ENCODE measurements at regions of chr7 and their contacts with region 1.

Region 1: GRCh38 chr7:151448261-151449252 is 8.6 kb upstream of the CRYGN start:
- DNase-seq: peak; percentile 55 to 92 (median 78)
- ATAC-seq: peak; percentile 91 to 92
- H3K4me3 Mint-ChIP-seq: peak overlapping the region; percentile 71 to 90 (median 82)
- H3K27ac Mint-ChIP-seq: peak overlapping the region in 7 of 10 donors; percentile 34 to 91 (median 81)
- H3K4me1 Mint-ChIP-seq: peaks cover 3 to 17% (median 8%) of the 10 kb centered on the region in 4 donors
- H3K27me3 Mint-ChIP-seq: peaks cover 0 to 6% (median 4%) of the 10 kb centered on the region in 5 donors

Region 2: GRCh38 chr7:151368136-151368571 is 80.4 kb before region 1 on chr7:
- POLR2A ChIA-PET with region 1: interaction called, 27 read pairs
- DNase-seq: peak; percentile 54 to 85 (median 72)
- ATAC-seq: peak; percentile 95 to 100
- H3K4me3 Mint-ChIP-seq: peak overlapping the region in 1 of 10 donors; percentile 8
- H3K27ac Mint-ChIP-seq: peak overlapping the region in 4 of 10 donors; percentile 3 to 76 (median 64)
- H3K4me1 Mint-ChIP-seq: peaks cover 8 to 21% (median 20%) of the 10 kb centered on the region in 4 donors
- H3K27me3 Mint-ChIP-seq: no peaks in the 10 kb centered on the region

Region 3: DNA sequence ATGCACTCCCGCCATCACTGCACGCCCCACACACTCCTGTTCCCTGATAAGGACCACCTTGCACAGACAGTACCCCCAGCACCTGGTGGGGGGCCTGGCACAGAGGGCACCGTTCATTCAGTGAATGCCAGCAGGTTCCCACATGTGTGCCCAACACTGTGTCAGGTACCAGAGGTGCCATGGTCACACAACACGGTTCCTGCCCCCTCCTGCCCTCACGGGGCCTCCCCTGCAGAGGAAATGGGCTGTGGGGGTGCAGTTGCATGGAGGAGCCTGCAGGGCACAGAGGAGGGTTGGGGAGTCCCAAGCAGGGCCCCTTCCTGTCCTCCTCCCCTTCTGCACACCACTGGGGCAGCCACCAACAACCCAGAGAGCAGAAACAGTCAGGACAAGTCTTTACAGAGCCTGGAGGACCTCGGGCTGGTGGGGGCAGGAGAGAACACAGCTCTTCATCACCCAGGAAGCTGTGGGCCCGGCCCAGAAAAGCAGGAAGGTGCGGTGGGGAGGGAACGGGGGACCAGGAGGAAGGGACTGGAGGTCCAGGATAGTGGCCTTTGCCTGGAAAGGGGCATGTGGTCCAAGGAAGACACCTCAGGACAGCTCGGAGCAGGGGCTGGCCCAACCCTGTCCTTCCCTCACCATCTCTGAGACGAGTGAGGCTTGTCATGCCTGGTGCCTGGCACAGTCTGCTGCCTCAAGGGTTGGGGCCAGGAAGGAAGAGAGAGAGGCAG is 15.6 kb before region 1 on chr7:
- POLR2A ChIA-PET with region 1: interaction called, 54 read pairs
- DNase-seq: peak in 9 of 10 donors; percentile 30 to 80 (median 57)
- ATAC-seq: peak; percentile 58
- H3K4me3 Mint-ChIP-seq: peak overlapping the region in 9 of 10 donors; percentile 14 to 75 (median 60)
- H3K27ac Mint-ChIP-seq: peak overlapping the region in 9 of 10 donors; percentile 67 to 93 (median 89)
- H3K4me1 Mint-ChIP-seq: peaks cover 29 to 74% (median 51%) of the 10 kb centered on the region in 4 donors
- H3K27me3 Mint-ChIP-seq: no peaks in the 10 kb centered on the region